ENCODE measurements at regions of chr5 and their contacts with region 1.

Region 1: DNA sequence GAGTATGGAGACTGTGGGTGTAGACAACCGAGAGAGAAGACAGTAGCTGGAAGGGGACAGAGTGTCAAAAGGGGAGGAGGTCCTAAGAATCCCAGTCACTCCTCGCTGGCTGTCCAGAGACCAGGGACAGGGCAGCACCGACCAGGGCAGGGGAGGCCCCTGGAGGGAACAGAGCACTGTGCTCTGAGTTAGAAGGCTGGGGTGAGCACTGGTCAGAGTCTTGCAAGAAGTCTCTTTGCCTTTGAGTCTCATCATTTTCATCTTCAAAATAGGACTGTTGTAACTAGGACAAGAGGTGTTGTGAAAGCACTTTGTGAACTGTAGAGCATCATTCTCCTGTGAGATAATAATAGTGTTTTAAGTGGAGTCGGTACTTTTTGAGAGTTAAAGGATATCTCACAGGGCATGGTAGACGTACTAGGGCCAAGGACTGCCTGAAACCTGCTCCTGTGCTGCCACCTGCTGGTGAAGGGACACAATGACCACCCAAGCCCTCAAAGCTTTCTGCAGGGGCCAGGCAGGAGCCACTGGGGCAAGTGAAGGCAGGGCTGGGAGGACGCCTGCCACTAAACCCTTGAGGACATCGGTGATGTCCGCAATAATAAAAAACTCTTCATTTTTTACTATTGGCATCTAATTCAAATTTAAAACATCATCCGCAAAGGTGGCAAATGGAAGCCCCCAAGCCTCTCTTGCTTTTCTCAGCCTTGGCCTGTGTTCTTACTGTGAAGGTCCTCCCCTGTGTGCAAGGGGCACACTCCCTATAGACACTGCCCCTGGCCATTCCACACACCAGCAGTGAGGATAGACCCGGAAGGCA is 28.2 kb downstream of the SLC6A7 start:
- DNase-seq: peak; percentile 81 to 88 (median 84)
- ATAC-seq: peak; percentile 73
- H3K4me3 ChIP-seq: no peak overlapping the region
- H3K4me1 ChIP-seq: peaks cover 28% of the 10 kb centered on the region
- CTCF ChIP-seq: peak; percentile 79

Region 2: GRCh38 chr5:150129813-150130492 is 88.1 kb before region 1 on chr5:
- intact Hi-C with region 1: loop called in 1 of 2 experiments (anchors 2 kb)
- DNase-seq: peak in 2 of 3 donors; percentile 83 to 85
- ATAC-seq: peak; percentile 89
- H3K4me3 ChIP-seq: no peak overlapping the region
- H3K4me1 ChIP-seq: peaks cover 13% of the 10 kb centered on the region
- CTCF ChIP-seq: peak; percentile 82

Region 3: DNA sequence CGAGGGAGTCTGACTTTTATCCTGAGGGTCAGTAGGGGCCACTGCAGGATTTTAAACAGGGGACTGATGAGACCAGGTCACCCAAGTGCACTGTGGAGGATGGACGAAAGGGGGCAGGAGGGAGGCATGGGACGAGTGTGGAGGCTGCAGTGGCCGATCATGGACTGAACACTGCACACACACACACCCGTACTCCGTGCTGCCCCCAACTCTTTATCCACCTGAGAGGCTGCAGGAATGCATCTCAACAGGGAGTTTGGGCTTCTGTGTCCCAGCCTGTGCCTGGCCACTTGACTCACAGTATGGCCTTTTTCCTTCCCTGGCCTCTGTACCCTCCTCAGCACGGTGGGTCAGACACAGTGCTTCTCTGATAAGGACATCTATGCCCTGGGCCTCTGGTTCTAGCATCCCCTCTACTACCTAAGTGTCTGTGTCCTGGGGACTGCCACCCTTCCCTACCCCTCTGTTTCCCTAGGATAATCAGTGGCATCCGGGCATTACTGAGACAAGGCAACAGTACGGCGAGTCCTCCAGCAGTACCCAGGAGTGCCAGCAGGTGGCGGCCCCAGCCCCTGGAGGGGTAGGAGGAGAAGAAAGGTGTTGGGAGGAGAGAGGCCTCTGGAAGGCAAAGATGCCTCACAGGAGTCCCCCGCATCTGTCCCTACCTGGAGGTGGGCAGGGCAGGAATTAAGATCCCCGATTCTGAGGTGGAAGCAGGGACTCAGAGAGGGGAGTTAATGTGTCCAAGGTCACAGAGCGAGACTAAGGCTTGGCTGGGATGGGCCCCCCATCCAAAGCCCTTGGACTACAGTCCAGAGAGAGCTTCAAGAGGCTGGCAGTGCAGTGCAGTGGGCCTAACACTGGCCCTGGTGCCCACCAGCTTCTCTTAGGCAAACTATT is 56.6 kb before region 1 on chr5:
- intact Hi-C with region 1: loop called in 1 of 2 experiments (anchors 2 kb)
- DNase-seq: peak; percentile 90 to 98 (median 97)
- ATAC-seq: peak; percentile 81
- H3K4me3 ChIP-seq: no peak overlapping the region
- H3K4me1 ChIP-seq: peaks cover 43% of the 10 kb centered on the region
- CTCF ChIP-seq: peak; percentile 90